OCI-LY7 (cell line): ENCODE measurements at regions of chr12 and their contacts with region 1.

Region 1: GRCh38 chr12:55926738-55927587 is 731 bp downstream of the PYM1 start:
- DNase-seq: peak; percentile 95
- H3K4me3 ChIP-seq: peak overlapping the region; percentile 82
- H3K27ac ChIP-seq: peak overlapping the region; percentile 99
- H3K4me1 ChIP-seq: peaks cover 51% of the 10 kb centered on the region
- CTCF ChIP-seq: peak; percentile 94

Region 2: GRCh38 chr12:55738123-55739024 is 188.6 kb before region 1 on chr12:
- CTCF ChIA-PET with region 1: interaction called, 3 read pairs
- POLR2A ChIA-PET with region 1: interaction called, 12 read pairs
- intact Hi-C with region 1: loop called (anchors 1 kb)
- DNase-seq: peak; percentile 96
- H3K4me3 ChIP-seq: peak overlapping the region; percentile 72
- H3K27ac ChIP-seq: peak overlapping the region; percentile 66
- H3K4me1 ChIP-seq: peaks cover 26% of the 10 kb centered on the region
- CTCF ChIP-seq: peak; percentile 94

Region 3: DNA sequence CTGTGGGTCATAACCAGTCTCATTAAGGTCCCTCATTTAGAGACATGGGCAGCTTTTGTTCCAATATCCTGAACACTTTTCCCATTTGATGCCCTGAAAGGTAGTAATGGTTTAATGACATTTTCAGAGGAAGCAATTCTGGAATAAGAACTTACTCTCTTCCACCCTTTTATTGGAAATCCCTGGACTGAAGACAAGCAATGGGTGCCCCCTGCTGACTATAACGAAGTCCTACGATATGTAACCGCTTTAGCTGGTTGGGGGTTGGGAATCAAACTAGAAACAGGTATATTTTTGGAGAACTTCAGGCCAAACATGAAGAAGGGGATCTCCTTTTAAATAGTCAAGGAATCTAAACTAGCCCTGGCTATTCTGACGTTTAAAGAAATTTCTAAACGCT is 129.9 kb before region 1 on chr12:
- CTCF ChIA-PET with region 1: no interaction called
- POLR2A ChIA-PET with region 1: no interaction called
- intact Hi-C with region 1: no loop called
- DNase-seq: peak; percentile 57
- H3K4me3 ChIP-seq: no peak overlapping the region
- H3K27ac ChIP-seq: no peak overlapping the region
- H3K4me1 ChIP-seq: no peaks in the 10 kb centered on the region
- CTCF ChIP-seq: peak; percentile 80

Region 4: GRCh38 chr12:55829967-55830600 is 96.9 kb before region 1 on chr12:
- CTCF ChIA-PET with region 1: interaction called, 7 read pairs
- POLR2A ChIA-PET with region 1: interaction called, 49 read pairs
- intact Hi-C with region 1: loop called (anchors 1 kb)
- DNase-seq: peak; percentile 52
- H3K4me3 ChIP-seq: peak overlapping the region; percentile 96
- H3K27ac ChIP-seq: peak overlapping the region; percentile 67
- H3K4me1 ChIP-seq: peaks cover 34% of the 10 kb centered on the region
- CTCF ChIP-seq: no peak

Region 5: GRCh38 chr12:55899082-55899481 is 27.9 kb before region 1 on chr12:
- CTCF ChIA-PET with region 1: no interaction called
- POLR2A ChIA-PET with region 1: no interaction called
- intact Hi-C with region 1: no loop called
- DNase-seq: no peak
- H3K4me3 ChIP-seq: no peak overlapping the region
- H3K27ac ChIP-seq: no peak overlapping the region
- H3K4me1 ChIP-seq: no peaks in the 10 kb centered on the region
- CTCF ChIP-seq: no peak

Region 6: DNA sequence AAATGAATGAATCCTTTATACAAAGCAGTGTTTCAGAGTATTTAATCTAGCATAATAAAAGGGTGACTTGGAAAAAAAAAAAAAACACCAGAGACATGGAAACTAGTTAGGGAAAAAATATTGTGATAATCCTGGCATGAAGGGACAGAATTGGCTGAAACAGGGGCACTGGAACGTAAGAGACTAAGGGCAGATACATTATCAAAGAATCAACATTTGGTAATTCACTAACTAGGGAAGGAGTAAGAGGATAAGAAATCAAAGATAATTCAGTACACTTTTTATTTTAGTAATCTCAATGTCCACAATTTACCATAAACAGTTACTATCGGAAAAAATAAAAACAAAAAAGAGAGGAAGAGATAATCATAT is 17.5 kb before region 1 on chr12:
- CTCF ChIA-PET with region 1: no interaction called
- POLR2A ChIA-PET with region 1: no interaction called
- intact Hi-C with region 1: no loop called
- DNase-seq: no peak
- H3K4me3 ChIP-seq: no peak overlapping the region
- H3K27ac ChIP-seq: no peak overlapping the region
- H3K4me1 ChIP-seq: peaks cover 10% of the 10 kb centered on the region
- CTCF ChIP-seq: no peak

Region 7: GRCh38 chr12:55973598-55974307 is 46.8 kb after region 1 on chr12 and contains the start of gene RAB5B:
- CTCF ChIA-PET with region 1: no interaction called
- POLR2A ChIA-PET with region 1: interaction called, 8 read pairs
- intact Hi-C with region 1: loop called (anchors 1 kb)
- DNase-seq: peak; percentile 100
- H3K4me3 ChIP-seq: peak within 1 kb of the TSS; percentile 88
- H3K27ac ChIP-seq: peak within 1 kb of the TSS; percentile 57
- H3K4me1 ChIP-seq: peaks cover 25% of the 10 kb centered on the region
- CTCF ChIP-seq: no peak
- total RNA-seq, gene RAB5B: 21.6 and 21.8 TPM in 2 replicates

Region 8: DNA sequence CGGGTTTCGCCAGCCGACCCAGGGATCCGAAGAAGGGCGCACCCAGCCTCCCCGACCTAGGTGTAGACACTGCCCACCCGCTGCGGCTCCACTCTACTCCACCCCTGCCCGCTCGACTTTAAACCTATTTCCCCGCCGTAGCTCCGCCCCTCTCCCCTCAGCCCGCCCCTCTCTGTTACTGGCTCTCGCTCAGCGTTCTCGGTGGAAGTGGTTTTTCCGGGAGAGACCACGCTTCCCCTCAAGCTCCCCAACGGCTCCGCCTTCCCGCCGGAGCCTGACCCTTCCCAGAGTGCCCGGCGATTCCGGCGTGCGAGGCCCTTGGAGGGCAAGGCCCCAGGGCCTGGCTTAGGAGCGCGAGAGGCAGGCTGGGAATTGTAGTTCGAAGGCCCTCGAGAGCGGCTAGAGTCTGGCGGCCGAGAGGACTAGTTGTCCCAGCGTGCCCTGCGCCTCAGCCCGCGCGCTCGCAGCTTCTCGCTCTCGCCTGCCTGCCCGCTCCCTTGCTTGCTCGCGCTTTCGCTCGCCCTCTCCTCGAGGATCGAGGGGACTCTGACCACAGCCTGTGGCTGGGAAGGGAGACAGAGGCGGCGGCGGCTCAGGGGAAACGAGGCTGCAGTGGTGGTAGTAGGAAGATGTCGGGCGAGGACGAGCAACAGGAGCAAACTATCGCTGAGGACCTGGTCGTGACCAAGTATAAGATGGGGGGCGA is 177.3 kb after region 1 on chr12 and contains the start of gene PA2G4:
- CTCF ChIA-PET with region 1: no interaction called
- POLR2A ChIA-PET with region 1: interaction called, 5 read pairs
- intact Hi-C with region 1: loop called (anchors 2 kb)
- DNase-seq: peak; percentile 99
- H3K4me3 ChIP-seq: peak within 1 kb of the TSS; percentile 93
- H3K27ac ChIP-seq: peak within 1 kb of the TSS; percentile 70
- H3K4me1 ChIP-seq: peaks cover 27% of the 10 kb centered on the region
- CTCF ChIP-seq: no peak
- total RNA-seq, gene PA2G4: 358 and 437 TPM in 2 replicates